Caco-2 (cell line): ENCODE measurements at regions of chr10 and their contacts with region 1.

Region 1: GRCh38 chr10:74826142-74827044 is at the start of gene KAT6B:
- DNase-seq: peak; percentile 100
- H3K4me3 ChIP-seq: peak within 1 kb of the TSS; percentile 98
- H3K4me3 Mint-ChIP-seq: peak within 1 kb of the TSS; percentile 86
- H3K27ac Mint-ChIP-seq: peak within 1 kb of the TSS; percentile 96
- H3K4me1 ChIP-seq: peaks cover 24% of the 10 kb centered on the region
- H3K4me1 Mint-ChIP-seq: peaks cover 31% of the 10 kb centered on the region
- H3K27me3 ChIP-seq: no peaks in the 10 kb centered on the region
- H3K27me3 Mint-ChIP-seq: no peaks in the 10 kb centered on the region
- CTCF ChIP-seq: peak in 1 of 2 experiments; percentile 26
- total RNA-seq, gene KAT6B: 14.9 and 16.8 TPM in 2 replicates

Region 2: DNA sequence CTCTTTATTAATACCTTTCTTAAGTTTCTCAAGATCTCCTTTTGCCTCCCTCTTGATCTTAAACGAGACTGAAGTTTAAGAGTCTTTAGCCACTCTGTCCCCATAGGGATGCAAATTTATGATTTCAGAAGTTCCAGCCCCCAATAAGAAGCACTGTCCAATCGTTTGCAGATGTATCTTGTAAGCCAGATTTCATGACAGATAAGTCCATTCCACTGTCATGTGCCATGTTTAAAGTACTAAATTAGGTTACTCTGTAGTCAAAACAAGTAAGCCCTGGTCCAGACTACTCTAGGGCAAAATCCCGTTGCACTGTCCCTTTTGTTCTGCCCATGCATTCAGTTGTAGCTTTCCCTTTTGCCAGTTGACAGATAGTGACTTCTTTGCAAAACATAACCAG is 157.2 kb before region 1 on chr10:
- CTCF ChIA-PET with region 1: no interaction called
- POLR2A ChIA-PET with region 1: interaction called, 11 read pairs
- intact Hi-C with region 1: no loop called
- DNase-seq: no peak
- H3K4me3 ChIP-seq: no peak overlapping the region
- H3K4me3 Mint-ChIP-seq: no peak overlapping the region
- H3K27ac Mint-ChIP-seq: no peak overlapping the region
- H3K4me1 ChIP-seq: no peaks in the 10 kb centered on the region
- H3K4me1 Mint-ChIP-seq: no peaks in the 10 kb centered on the region
- H3K27me3 ChIP-seq: no peaks in the 10 kb centered on the region
- H3K27me3 Mint-ChIP-seq: no peaks in the 10 kb centered on the region
- CTCF ChIP-seq: no peak

Region 3: GRCh38 chr10:74917481-74918077 is 91.2 kb after region 1 on chr10:
- CTCF ChIA-PET with region 1: no interaction called
- POLR2A ChIA-PET with region 1: no interaction called
- intact Hi-C with region 1: no loop called
- DNase-seq: no peak
- H3K4me3 ChIP-seq: no peak overlapping the region
- H3K4me3 Mint-ChIP-seq: no peak overlapping the region
- H3K27ac Mint-ChIP-seq: no peak overlapping the region
- H3K4me1 ChIP-seq: peaks cover 1% of the 10 kb centered on the region; the same call in 1 of the 2 replicates
- H3K4me1 Mint-ChIP-seq: peaks cover 8% of the 10 kb centered on the region
- H3K27me3 ChIP-seq: no peaks in the 10 kb centered on the region
- H3K27me3 Mint-ChIP-seq: no peaks in the 10 kb centered on the region
- CTCF ChIP-seq: no peak

Region 4: GRCh38 chr10:75111367-75111906 is 285.0 kb after region 1 on chr10 and contains the start of gene SAMD8:
- CTCF ChIA-PET with region 1: no interaction called
- POLR2A ChIA-PET with region 1: no interaction called
- intact Hi-C with region 1: loop called (anchors 2 kb)
- DNase-seq: peak; percentile 99
- H3K4me3 ChIP-seq: peak within 1 kb of the TSS; percentile 75
- H3K4me3 Mint-ChIP-seq: peak within 1 kb of the TSS; percentile 88
- H3K27ac Mint-ChIP-seq: peak within 1 kb of the TSS; percentile 92
- H3K4me1 ChIP-seq: peaks cover 31% of the 10 kb centered on the region
- H3K4me1 Mint-ChIP-seq: peaks cover 31% of the 10 kb centered on the region
- H3K27me3 ChIP-seq: no peaks in the 10 kb centered on the region
- H3K27me3 Mint-ChIP-seq: no peaks in the 10 kb centered on the region
- CTCF ChIP-seq: peak in 1 of 2 experiments; percentile 53
- total RNA-seq, gene SAMD8: 25.2 and 26.9 TPM in 2 replicates